HCT116 (cell line): ENCODE measurements at regions of chr1 and their contacts with region 1.

Region 1: DNA sequence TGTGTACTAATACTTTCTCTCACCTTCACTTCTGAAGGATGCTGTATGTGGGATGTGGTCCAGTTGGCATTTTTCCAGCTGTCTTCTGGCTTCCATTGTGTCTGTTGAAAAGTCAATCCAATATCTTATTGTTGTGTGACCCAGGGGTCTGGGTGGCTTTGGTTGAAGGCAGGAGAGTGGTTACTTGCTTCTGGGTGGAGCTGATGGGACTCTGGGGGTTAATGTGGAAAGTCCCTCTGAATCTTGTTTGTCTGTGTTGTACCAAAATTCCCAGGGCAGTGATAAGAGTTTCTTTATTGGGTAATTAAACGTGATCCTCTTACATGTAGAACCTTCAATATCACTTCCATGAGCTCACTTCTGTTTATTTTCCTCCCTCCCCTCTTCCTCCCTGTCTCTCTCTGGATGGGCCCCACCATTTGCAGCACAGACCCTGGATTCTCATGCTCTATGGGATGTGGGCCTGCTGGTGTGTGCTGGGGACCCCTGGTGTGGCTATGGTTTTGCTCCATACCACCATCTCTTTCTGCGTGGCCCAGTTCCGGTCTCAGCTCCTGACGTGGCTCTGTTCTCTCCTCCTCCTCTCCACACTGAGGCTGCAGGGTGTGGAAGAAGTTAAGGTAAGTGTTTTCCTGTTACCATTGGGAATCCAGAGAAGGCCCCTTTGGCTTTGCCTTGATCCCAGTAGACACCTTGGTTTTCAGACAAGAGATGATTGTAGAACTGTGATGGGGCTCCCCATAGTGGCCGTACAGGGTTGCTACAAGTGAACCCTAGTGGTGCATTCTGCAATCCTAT is 71.5 kb downstream of the HHAT start:
- DNase-seq: peak; percentile 46
- ATAC-seq: peak; percentile 100
- H3K4me3 ChIP-seq: no peak overlapping the region
- H3K27ac ChIP-seq: no peak overlapping the region
- H3K4me1 ChIP-seq: no peaks in the 10 kb centered on the region
- H3K27me3 ChIP-seq: no peaks in the 10 kb centered on the region
- CTCF ChIP-seq: peak; percentile 86 to 89 (median 88)
- POLR2A ChIP-seq: no peak
- RAD21 ChIP-seq: peak; percentile 88

Region 2: GRCh38 chr1:210143465-210144062 is 256.7 kb before region 1 on chr1:
- CTCF ChIA-PET with region 1: no interaction called
- POLR2A ChIA-PET with region 1: no interaction called
- RAD21 ChIA-PET with region 1: no interaction called
- intact Hi-C with region 1: loop called (anchors 1 kb)
- DNase-seq: peak; percentile 58
- ATAC-seq: peak; percentile 69
- H3K4me3 ChIP-seq: no peak overlapping the region
- H3K27ac ChIP-seq: no peak overlapping the region
- H3K4me1 ChIP-seq: no peaks in the 10 kb centered on the region
- H3K27me3 ChIP-seq: peaks cover 19% of the 10 kb centered on the region
- CTCF ChIP-seq: peak; percentile 55 to 75 (median 70); a peak in 4 of 6 replicates
- POLR2A ChIP-seq: no peak
- RAD21 ChIP-seq: peak; percentile 80

Region 3: GRCh38 chr1:210360852-210361477 is 39.3 kb before region 1 on chr1:
- CTCF ChIA-PET with region 1: interaction called, 5 read pairs
- POLR2A ChIA-PET with region 1: no interaction called
- RAD21 ChIA-PET with region 1: no interaction called
- intact Hi-C with region 1: loop called (anchors 1 kb)
- DNase-seq: peak; percentile 16
- ATAC-seq: peak; percentile 83
- H3K4me3 ChIP-seq: no peak overlapping the region
- H3K27ac ChIP-seq: no peak overlapping the region
- H3K4me1 ChIP-seq: no peaks in the 10 kb centered on the region
- H3K27me3 ChIP-seq: no peaks in the 10 kb centered on the region
- CTCF ChIP-seq: peak; percentile 57 to 71 (median 66)
- POLR2A ChIP-seq: no peak
- RAD21 ChIP-seq: peak; percentile 72

Region 4: GRCh38 chr1:210373885-210374599 is 26.2 kb before region 1 on chr1:
- CTCF ChIA-PET with region 1: interaction called, 5 read pairs
- POLR2A ChIA-PET with region 1: interaction called, 12 read pairs
- RAD21 ChIA-PET with region 1: no interaction called
- intact Hi-C with region 1: loop called (anchors 2 kb)
- DNase-seq: peak; percentile 96
- ATAC-seq: peak; percentile 81
- H3K4me3 ChIP-seq: no peak overlapping the region
- H3K27ac ChIP-seq: peak overlapping the region; percentile 32; the same call in 1 of the 2 replicates
- H3K4me1 ChIP-seq: peaks cover 0 to 33% of the 10 kb centered on the region in 2 experiments; a peak in 3 of 4 replicates
- H3K27me3 ChIP-seq: no peaks in the 10 kb centered on the region
- CTCF ChIP-seq: peak; percentile 76 to 99 (median 98)
- POLR2A ChIP-seq: peak; percentile 100
- RAD21 ChIP-seq: peak; percentile 49

Region 5: GRCh38 chr1:210527091-210527490 is 126.8 kb after region 1 on chr1:
- CTCF ChIA-PET with region 1: no interaction called
- POLR2A ChIA-PET with region 1: no interaction called
- RAD21 ChIA-PET with region 1: no interaction called
- intact Hi-C with region 1: no loop called
- DNase-seq: no peak
- ATAC-seq: no peak
- H3K4me3 ChIP-seq: no peak overlapping the region
- H3K27ac ChIP-seq: no peak overlapping the region
- H3K4me1 ChIP-seq: no peaks in the 10 kb centered on the region
- H3K27me3 ChIP-seq: peaks cover 13% of the 10 kb centered on the region
- CTCF ChIP-seq: no peak
- POLR2A ChIP-seq: no peak
- RAD21 ChIP-seq: no peak

Region 6: DNA sequence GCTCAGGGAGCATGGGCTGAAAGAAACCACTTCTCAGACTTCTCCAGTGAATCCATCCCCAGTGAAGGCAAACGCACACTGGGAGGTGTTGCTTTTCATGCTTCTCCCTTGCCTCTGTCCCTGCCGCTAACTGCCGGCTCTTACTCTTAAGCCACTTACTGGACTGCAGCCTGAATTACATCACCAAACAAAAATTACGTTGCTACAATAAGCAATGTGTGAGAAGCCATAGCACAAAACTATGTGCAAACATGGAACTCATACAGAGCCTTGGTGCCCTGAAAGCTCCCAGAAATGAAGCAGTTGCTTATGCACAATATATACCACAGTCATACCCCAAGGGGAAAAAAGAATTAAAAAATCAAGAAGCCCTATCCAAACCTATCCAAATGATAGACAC is 358.5 kb after region 1 on chr1:
- CTCF ChIA-PET with region 1: no interaction called
- POLR2A ChIA-PET with region 1: no interaction called
- RAD21 ChIA-PET with region 1: no interaction called
- intact Hi-C with region 1: no loop called
- DNase-seq: no peak
- ATAC-seq: no peak
- H3K4me3 ChIP-seq: no peak overlapping the region
- H3K27ac ChIP-seq: no peak overlapping the region
- H3K4me1 ChIP-seq: no peaks in the 10 kb centered on the region
- H3K27me3 ChIP-seq: no peaks in the 10 kb centered on the region
- CTCF ChIP-seq: no peak
- POLR2A ChIP-seq: no peak
- RAD21 ChIP-seq: no peak